AG04450 (cell line): ENCODE measurements at regions of chr1 and their contacts with region 1.

Region 1: GRCh38 chr1:89598450-89599331 is 34.2 kb upstream of the LRRC8C start:
- DNase-seq: no peak
- H3K4me3 ChIP-seq: no peak overlapping the region
- H3K27ac ChIP-seq: no peak overlapping the region
- H3K27me3 ChIP-seq: no peaks in the 10 kb centered on the region
- CTCF ChIP-seq: peak; percentile 69

Region 2: DNA sequence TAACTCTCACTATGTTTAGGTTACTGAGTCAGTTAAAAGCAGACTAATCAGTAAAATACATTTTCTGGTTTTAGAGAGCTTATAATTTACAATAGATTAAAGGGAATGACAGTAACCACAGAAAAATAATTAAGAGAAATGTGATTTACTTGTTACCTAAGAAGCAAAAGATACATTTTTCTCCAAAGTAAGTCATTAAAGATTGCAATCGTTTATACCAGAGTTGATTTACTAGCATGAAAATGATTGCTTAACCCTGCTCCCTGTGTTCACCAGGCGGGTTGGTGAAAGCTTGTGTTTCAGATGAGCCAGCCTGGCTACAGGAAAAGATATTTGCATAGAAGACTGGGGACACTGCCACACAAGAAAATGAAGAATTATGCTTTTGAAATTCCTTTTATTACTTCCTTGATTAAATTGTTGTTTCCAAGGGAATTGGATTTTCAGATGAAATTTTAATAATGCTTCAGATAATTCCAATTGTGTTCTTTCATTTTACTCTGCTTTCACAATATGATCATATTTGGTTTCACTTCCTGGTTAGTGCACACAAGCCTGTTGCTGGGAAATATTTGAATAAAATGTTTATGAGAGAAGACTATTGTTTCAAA is 46.1 kb before region 1 on chr1:
- CTCF ChIA-PET with region 1: no interaction called
- POLR2A ChIA-PET with region 1: no interaction called
- DNase-seq: no peak
- H3K4me3 ChIP-seq: no peak overlapping the region
- H3K27ac ChIP-seq: no peak overlapping the region
- H3K27me3 ChIP-seq: no peaks in the 10 kb centered on the region
- CTCF ChIP-seq: no peak

Region 3: DNA sequence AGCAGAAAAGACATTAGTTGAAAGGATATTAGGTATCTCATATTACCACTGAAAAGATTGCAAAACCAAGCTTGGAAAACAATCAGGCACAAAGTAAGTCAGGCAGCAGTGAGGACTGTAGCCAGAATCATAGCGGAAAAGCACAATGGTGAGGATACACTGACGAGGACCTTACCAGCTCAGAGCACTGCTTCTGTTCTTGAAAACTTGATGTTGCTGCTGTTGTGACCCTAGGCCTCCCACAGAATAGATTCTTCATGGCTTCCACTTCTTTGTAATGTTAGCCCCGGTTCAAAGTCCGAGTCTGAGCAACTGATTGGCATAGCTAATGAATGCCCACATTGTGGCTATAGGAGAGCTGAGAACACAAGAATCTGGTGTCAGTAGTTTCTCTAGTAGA is 11.0 kb before region 1 on chr1:
- CTCF ChIA-PET with region 1: interaction called, 12 read pairs
- POLR2A ChIA-PET with region 1: no interaction called
- DNase-seq: no peak
- H3K4me3 ChIP-seq: no peak overlapping the region
- H3K27ac ChIP-seq: no peak overlapping the region
- H3K27me3 ChIP-seq: no peaks in the 10 kb centered on the region
- CTCF ChIP-seq: no peak

Region 4: DNA sequence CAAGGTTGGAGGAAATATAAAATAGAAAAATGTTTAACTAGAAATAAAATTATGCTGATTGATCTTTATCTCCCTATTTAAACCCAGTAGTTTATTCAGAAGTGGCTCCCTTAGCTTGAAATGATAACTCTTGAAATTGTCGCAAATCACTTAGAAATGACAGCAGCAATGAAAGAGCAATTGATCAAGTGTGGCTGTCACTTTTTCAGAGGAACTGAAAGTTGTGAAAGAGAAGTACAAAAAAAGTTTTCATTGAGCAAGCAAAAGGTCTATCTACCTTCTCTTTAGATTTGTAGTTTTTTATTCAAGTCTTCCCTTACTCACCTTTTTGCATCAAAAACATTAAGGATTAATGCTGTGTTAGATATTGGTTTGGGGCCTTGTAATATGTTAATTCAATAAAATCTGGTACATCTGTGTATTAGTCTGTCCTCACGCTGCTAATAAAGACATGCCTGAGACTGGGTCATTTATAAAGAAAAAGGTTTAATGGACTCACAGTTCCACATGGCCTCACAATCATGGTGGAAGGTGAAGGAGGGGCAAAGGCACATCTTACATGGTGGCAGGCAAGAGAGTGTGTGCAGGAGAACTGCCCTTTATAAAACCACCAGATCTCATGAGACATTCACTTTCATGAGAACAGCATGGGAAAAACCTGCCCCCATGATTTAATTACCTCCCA is 82.5 kb after region 1 on chr1:
- CTCF ChIA-PET with region 1: no interaction called
- POLR2A ChIA-PET with region 1: no interaction called
- DNase-seq: no peak
- H3K4me3 ChIP-seq: no peak overlapping the region
- H3K27ac ChIP-seq: no peak overlapping the region
- H3K27me3 ChIP-seq: no peaks in the 10 kb centered on the region
- CTCF ChIP-seq: no peak

Region 5: GRCh38 chr1:89820422-89821321 is 222.0 kb after region 1 on chr1 and contains the start of gene LRRC8D:
- CTCF ChIA-PET with region 1: no interaction called
- POLR2A ChIA-PET with region 1: no interaction called
- DNase-seq: no peak
- H3K4me3 ChIP-seq: peak within 1 kb of the TSS; percentile 75
- H3K27ac ChIP-seq: no peak within 1 kb of the TSS
- H3K27me3 ChIP-seq: peaks cover 4% of the 10 kb centered on the region
- CTCF ChIP-seq: no peak
- polyA plus RNA-seq, gene LRRC8D: 41.1 and 48.7 TPM in 2 replicates

Region 6: DNA sequence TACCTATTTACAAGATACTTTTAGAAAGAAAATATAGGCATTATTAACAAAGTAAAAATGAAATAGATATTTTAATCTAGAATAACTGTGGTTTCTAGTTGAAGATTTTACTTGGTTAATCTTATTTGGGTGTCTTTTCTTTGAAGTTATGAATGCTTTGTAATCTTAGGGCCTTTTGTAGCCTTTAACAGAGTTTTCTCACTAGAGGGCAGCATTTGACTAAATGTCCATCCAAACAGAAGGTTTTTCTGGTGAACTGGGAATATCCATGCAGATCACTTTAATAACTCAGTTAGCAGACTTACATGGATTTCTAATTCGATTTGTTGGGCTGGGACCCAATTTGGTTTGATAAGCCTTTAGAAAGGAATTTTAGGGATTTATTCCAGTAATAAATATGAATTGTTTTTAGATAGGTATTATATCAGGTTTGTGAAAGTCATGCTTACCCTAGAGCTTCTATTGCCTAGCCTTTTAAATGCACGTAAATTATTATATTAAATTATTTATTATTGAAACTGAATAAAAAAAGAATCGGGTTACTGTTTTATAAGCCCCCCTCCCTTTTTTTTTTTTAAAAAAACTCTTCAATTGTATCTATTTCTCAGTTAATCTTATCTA is 515.9 kb after region 1 on chr1:
- CTCF ChIA-PET with region 1: no interaction called
- POLR2A ChIA-PET with region 1: no interaction called
- DNase-seq: peak; percentile 13
- H3K4me3 ChIP-seq: no peak overlapping the region
- H3K27ac ChIP-seq: no peak overlapping the region
- H3K27me3 ChIP-seq: no peaks in the 10 kb centered on the region
- CTCF ChIP-seq: peak; percentile 75